Gastrocnemius medialis (tissue), 4 donors: ENCODE measurements at regions of chr9 and their contacts with region 1.

Region 1: GRCh38 chr9:128702445-128702948 is at the start of gene PKN3:
- DNase-seq: peak; percentile 57 to 69
- ATAC-seq: peak; percentile 86 to 91
- H3K4me3 ChIP-seq: peak within 1 kb of the TSS; percentile 62 to 89 (median 76)
- H3K27ac ChIP-seq: peak within 1 kb of the TSS; percentile 69 to 79 (median 74)
- H3K4me1 ChIP-seq: peaks cover 0 to 11% of the 10 kb centered on the region in 2 donors
- H3K27me3 ChIP-seq: no peaks in the 10 kb centered on the region
- CTCF ChIP-seq: peak; percentile 66 to 91 (median 85)
- POLR2A ChIP-seq: no peak
- total RNA-seq, gene PKN3: 1.4 to 5.2 (median 3.3) TPM

Region 2: DNA sequence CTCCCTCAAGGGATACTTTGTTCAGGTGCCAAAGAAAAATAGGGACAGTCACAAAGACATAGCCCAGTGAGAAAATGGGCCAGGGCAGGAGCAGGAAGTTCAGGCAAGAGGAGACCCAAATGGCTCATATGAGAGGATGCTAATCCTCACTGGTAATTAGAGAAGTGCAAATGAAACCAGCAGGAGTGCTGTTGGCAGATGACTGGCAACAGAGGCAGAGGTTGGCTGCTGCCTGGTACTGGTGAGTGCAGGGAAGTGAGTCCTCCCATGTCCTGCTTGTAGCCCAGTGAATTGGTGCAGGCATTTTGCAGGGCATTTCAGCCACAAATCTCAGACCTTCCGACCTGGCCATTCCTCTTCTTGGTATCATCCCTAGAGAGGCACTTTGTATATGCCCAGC is 223.2 kb before region 1 on chr9:
- in situ Hi-C with region 1: no loop called
- intact Hi-C with region 1: no loop called
- DNase-seq: no peak
- ATAC-seq: no peak
- H3K4me3 ChIP-seq: no peak overlapping the region
- H3K27ac ChIP-seq: no peak overlapping the region
- H3K4me1 ChIP-seq: no peaks in the 10 kb centered on the region
- H3K27me3 ChIP-seq: no peaks in the 10 kb centered on the region
- CTCF ChIP-seq: no peak
- POLR2A ChIP-seq: no peak

Region 3: DNA sequence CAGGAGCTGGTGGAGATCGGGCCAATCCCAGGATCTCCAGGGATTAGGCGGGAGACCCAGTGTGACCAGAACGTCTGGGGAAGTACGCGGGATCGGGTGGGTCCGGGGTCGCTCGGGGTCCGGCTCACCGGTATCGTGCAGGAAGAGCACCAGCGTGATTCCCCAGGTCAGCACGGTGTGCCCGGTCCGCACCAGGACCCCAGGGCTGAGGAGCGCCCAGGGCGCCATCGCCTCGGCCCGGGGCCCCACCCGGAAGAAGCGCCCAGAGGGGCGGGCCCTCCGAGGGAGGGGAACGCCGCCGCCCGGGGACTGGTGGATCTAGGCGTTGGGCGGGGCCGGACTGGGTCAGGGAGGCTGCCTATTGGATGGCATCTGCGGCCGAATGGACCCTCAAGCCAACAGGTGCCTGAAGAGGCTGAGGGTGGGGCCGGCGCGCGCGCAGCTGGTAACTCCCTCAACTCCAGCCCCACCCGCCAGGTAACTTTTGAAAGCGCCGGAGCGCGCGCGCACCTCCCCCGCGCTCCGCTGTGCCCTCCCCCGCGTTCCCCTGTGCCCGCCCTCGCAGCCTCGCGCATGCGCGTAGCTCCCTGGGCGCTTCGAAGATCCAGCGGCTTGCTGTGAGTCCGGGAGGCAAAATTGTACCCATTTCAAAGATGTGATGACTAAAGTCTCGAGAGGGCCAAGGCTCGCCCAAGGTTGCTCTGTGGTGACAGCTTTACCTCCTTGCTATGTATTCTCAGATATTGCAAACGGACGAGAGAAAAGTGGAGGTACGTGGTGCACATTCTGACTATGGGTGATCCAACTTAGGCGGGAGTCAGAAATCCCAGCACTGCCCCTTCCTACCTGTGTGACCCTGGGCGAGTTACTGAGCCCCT is 21.6 kb after region 1 on chr9 and contains the start of gene ZDHHC12:
- in situ Hi-C with region 1: no loop called
- intact Hi-C with region 1: loop called (anchors 1 kb)
- DNase-seq: peak; percentile 92 to 98
- ATAC-seq: peak; percentile 90 to 93
- H3K4me3 ChIP-seq: peak within 1 kb of the TSS; percentile 62 to 85 (median 76)
- H3K27ac ChIP-seq: peak within 1 kb of the TSS; percentile 74 to 84 (median 80)
- H3K4me1 ChIP-seq: peaks cover 0 to 8% of the 10 kb centered on the region in 2 donors
- H3K27me3 ChIP-seq: no peaks in the 10 kb centered on the region
- CTCF ChIP-seq: no peak
- POLR2A ChIP-seq: peak; percentile 52 to 81
- total RNA-seq, gene ZDHHC12: 8.9 to 37.3 (median 31.0) TPM

Region 4: DNA sequence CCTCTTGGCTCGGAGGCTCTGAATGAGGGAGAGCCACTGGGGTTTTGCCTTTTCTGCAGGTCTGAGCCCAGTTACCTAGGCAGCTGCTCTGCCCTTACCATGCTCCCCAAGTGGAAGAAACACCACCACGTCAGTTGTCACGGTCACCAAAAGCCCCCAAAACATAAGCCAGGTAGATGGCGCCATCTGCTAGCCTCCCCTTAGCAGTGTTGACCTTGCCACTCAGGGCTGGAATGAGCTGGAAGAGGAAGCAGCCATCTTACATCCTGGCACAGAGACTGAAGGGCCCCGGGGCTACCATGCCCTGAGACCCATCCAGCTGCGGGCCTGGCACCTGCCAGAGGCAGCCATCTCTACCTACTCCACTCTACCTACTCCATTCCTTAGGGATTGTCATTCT is 61.9 kb after region 1 on chr9:
- in situ Hi-C with region 1: no loop called
- intact Hi-C with region 1: no loop called
- DNase-seq: no peak
- ATAC-seq: no peak
- H3K4me3 ChIP-seq: no peak overlapping the region
- H3K27ac ChIP-seq: no peak overlapping the region
- H3K4me1 ChIP-seq: peaks cover 10 to 29% of the 10 kb centered on the region in 2 donors
- H3K27me3 ChIP-seq: no peaks in the 10 kb centered on the region
- CTCF ChIP-seq: no peak
- POLR2A ChIP-seq: no peak

Region 5: DNA sequence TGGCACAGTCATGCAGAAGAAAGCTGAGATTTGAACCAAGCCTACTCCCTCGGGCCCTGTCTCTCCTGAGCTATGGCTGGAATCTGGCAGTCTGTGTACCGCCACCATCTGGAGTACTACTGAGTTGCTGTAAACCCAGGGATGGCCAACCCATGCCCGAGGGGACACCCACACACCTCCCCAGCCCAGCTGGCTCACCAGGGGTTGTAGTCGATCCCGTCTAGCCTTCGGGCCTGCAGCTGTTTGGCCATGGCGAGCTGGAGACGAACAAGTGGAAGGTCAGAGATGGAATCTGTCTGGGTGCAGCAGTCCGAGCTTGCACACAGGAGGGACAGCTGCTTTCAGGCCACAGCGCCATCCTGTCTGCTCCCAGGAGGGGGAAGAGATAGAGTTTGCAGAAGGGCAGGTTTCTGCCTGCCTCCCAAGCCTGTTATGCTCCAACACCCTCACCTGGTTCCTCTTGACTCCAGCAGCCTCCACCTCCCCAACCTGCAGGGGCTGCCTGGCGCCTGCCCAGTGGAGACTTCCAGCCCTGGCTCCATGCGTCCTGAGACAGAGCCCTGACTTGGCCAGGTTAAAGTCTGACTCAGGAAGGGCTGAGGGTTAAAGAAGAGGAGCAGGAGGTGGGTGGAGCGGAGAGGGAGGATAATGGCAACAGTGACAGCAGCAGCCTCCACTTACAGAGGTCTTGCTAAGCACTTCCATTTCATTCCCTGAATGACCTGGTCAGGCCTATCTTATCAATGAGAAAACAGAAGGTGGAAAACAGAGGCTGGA is 142.8 kb after region 1 on chr9:
- in situ Hi-C with region 1: no loop called
- intact Hi-C with region 1: no loop called
- DNase-seq: peak in 1 of 2 donors; percentile 4
- ATAC-seq: no peak
- H3K4me3 ChIP-seq: no peak overlapping the region
- H3K27ac ChIP-seq: no peak overlapping the region
- H3K4me1 ChIP-seq: no peaks in the 10 kb centered on the region
- H3K27me3 ChIP-seq: no peaks in the 10 kb centered on the region
- CTCF ChIP-seq: no peak
- POLR2A ChIP-seq: no peak

Region 6: GRCh38 chr9:129802851-129803675 is 1100.6 kb after region 1 on chr9 and contains the start of gene TOR1B:
- in situ Hi-C with region 1: no loop called
- intact Hi-C with region 1: no loop called
- DNase-seq: peak; percentile 84 to 89
- ATAC-seq: peak; percentile 91 to 96
- H3K4me3 ChIP-seq: peak within 1 kb of the TSS; percentile 78 to 99 (median 89)
- H3K27ac ChIP-seq: peak within 1 kb of the TSS; percentile 82 to 90 (median 86)
- H3K4me1 ChIP-seq: peaks cover 8 to 10% of the 10 kb centered on the region in 2 donors
- H3K27me3 ChIP-seq: no peaks in the 10 kb centered on the region
- CTCF ChIP-seq: peak in 1 of 5 experiments; percentile 12
- POLR2A ChIP-seq: peak; percentile 63 to 79
- total RNA-seq, gene TOR1B: 15.9 to 22.6 (median 21.2) TPM